Endothelial cell of umbilical vein (primary cell): ENCODE measurements at regions of chr6 and their contacts with region 1.

Region 1: GRCh38 chr6:57089687-57090460 is at the start of gene ZNF451:
- DNase-seq: peak; percentile 99
- H3K4me3 ChIP-seq: peak within 1 kb of the TSS; percentile 57 to 70 (median 63)
- H3K27ac ChIP-seq: peak within 1 kb of the TSS; percentile 69
- H3K4me1 ChIP-seq: peaks cover 30% of the 10 kb centered on the region
- H3K27me3 ChIP-seq: no peaks in the 10 kb centered on the region
- CTCF ChIP-seq: no peak
- POLR2A ChIP-seq: peak; percentile 49
- total RNA-seq, gene ZNF451: 54.2 and 64.4 TPM in 2 replicates

Region 2: GRCh38 chr6:57048577-57048976 is 41.3 kb before region 1 on chr6:
- CTCF ChIA-PET with region 1: no interaction called
- POLR2A ChIA-PET with region 1: no interaction called
- dilution Hi-C with region 1: no loop called
- intact Hi-C with region 1: loop called (anchors 5 kb)
- DNase-seq: no peak
- H3K4me3 ChIP-seq: no peak overlapping the region
- H3K27ac ChIP-seq: no peak overlapping the region
- H3K4me1 ChIP-seq: peaks cover 10% of the 10 kb centered on the region
- H3K27me3 ChIP-seq: peaks cover 1 to 4% of the 10 kb centered on the region in 2 experiments
- CTCF ChIP-seq: no peak
- POLR2A ChIP-seq: no peak

Region 3: GRCh38 chr6:57172136-57173055 is 82.5 kb after region 1 on chr6 and contains the start of gene BAG2:
- CTCF ChIA-PET with region 1: no interaction called
- POLR2A ChIA-PET with region 1: no interaction called
- dilution Hi-C with region 1: no loop called
- intact Hi-C with region 1: loop called (anchors 1 kb)
- DNase-seq: peak; percentile 80
- H3K4me3 ChIP-seq: peak within 1 kb of the TSS; percentile 71 to 79 (median 72)
- H3K27ac ChIP-seq: peak within 1 kb of the TSS; percentile 32
- H3K4me1 ChIP-seq: peaks cover 11% of the 10 kb centered on the region
- H3K27me3 ChIP-seq: no peaks in the 10 kb centered on the region
- CTCF ChIP-seq: peak in 1 of 2 donors; percentile 32
- POLR2A ChIP-seq: peak; percentile 28
- total RNA-seq, gene BAG2: 3.6 and 3.9 TPM in 2 replicates